ENCODE measurements at regions of chr4 and their contacts with region 1.

Region 1: GRCh38 chr4:78517050-78517652 is 34.4 kb upstream of the ANXA3 start:
- DNase-seq: peak; percentile 25 to 47 (median 40)
- H3K4me3 ChIP-seq: no peak overlapping the region
- H3K27ac ChIP-seq: no peak overlapping the region
- H3K4me1 ChIP-seq: peaks cover 0 to 7% (median 2%) of the 10 kb centered on the region in 4 experiments
- H3K27me3 ChIP-seq: no peaks in the 10 kb centered on the region

Region 2: DNA sequence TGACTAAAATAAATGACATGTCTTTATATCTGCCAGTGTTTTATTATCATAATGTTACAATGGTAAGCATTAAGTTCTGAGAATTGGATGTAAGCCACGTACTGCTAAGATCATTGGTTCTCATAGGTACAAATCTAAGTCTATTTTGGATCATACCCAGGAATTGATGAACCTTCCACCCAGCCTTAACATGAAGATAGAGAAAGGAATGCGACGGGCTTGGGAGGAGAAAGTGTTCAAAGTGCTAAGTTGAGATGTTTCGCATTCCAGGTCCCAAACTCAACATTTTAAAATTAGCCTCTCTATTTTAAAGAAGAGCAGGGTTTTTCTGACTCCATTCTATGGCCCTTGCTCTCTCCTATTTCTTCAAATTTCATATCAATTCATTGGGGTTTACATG is 514.9 kb before region 1 on chr4:
- CTCF ChIA-PET with region 1: no interaction called
- POLR2A ChIA-PET with region 1: no interaction called
- DNase-seq: no peak
- H3K4me3 ChIP-seq: no peak overlapping the region
- H3K27ac ChIP-seq: no peak overlapping the region
- H3K4me1 ChIP-seq: no peaks in the 10 kb centered on the region
- H3K27me3 ChIP-seq: no peaks in the 10 kb centered on the region

Region 3: DNA sequence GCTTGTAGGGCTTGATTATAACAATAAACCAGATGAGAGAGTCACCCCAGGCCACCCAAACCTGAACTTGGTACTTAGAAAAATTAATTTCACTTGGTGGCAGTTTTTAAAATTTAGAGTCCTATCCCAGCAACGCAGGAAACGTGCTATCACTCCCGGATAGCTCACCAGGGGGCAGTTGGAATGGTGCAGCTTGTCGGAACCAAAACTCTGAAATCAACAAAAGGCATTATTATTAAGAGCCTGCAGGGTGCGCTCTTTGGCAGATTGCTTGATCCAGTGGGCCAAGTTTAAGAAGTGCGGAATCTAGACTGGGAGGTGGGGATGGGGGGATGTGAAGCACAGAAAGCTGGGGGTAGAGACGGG is 457.6 kb before region 1 on chr4:
- CTCF ChIA-PET with region 1: interaction called, 14 read pairs
- POLR2A ChIA-PET with region 1: interaction called, 4 read pairs
- DNase-seq: peak; percentile 85 to 89 (median 89)
- H3K4me3 ChIP-seq: peak overlapping the region in 6 of 7 experiments; percentile 59 to 84 (median 75)
- H3K27ac ChIP-seq: no peak overlapping the region
- H3K4me1 ChIP-seq: peaks cover 7 to 34% (median 32%) of the 10 kb centered on the region in 4 experiments
- H3K27me3 ChIP-seq: peaks cover 0 to 52% (median 28%) of the 10 kb centered on the region in 5 experiments

Region 4: DNA sequence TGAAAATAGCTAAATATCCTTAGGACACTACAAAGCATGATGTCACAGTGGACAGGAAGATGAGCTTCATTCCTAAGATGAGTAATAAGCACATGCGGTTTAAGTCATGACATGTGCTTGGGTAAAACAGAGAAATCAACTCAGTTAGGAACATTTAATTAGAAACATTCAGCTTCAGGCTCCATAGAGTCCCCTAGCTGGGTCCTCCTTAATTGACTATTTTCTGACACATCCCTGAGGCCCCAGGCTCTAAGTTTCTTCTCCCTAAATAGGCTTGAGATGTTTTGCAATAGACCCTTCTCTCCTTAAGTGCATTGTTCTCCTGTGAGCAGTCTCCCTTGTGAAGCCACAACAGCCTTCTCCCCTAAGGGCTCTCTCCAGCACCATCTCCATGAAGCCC is 36.0 kb before region 1 on chr4:
- CTCF ChIA-PET with region 1: interaction called, 3 read pairs
- POLR2A ChIA-PET with region 1: interaction called, 10 read pairs
- DNase-seq: no peak
- H3K4me3 ChIP-seq: no peak overlapping the region
- H3K27ac ChIP-seq: no peak overlapping the region
- H3K4me1 ChIP-seq: no peaks in the 10 kb centered on the region
- H3K27me3 ChIP-seq: no peaks in the 10 kb centered on the region